ENCODE measurements at regions of chr6 and their contacts with region 1.

Region 1: DNA sequence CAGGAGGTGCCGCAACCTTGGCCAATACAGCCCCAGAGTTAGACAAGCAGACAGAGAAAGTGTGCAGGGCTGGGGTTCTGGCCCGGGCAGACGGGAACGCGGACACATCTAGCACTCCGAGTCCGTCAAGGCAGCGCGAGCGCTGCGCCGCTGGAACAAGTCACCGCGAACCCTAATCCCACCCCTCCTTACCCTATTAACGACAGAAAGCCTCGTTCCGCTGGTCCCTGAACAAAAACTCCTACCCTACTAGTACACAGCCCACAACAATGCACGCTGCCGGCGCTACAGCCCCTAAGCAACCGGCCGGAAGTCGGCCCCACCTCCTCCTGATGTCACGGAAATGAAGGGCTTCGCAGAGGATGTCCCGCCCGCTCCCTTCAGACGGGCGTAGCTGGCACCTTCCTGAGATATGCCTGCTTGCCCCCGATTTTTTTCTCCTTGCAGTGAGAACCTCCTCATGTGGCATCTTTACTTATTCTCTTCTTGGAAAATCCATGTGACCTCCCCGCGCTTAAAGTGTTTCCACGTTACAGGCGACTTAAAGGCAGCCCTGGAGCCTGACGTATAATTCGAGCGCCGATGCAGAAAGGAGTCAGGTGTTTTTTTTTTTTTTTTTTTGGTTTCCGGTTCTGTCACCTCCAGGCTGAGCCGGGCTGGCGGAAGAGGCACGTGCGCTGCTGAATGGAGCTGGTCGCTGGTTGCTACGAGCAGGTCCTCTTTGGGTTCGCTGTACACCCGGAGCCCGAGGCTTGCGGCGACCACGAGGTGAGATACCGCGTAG is at the starts of genes C6orf52 and PAK1IP1:
- DNase-seq: peak; percentile 91
- H3K4me3 ChIP-seq: peak within 1 kb of the TSS; percentile 58 to 98 (median 96)
- H3K27ac ChIP-seq: peak within 1 kb of the TSS; percentile 98
- H3K4me1 ChIP-seq: peaks cover 19% of the 10 kb centered on the region
- H3K27me3 ChIP-seq: no peaks in the 10 kb centered on the region
- CTCF ChIP-seq: no peak
- total RNA-seq, gene C6orf52: 0.50 TPM in 1 of 2 donors, not detected in the other
- total RNA-seq, gene PAK1IP1: 14.8 to 24.7 TPM

Region 2: GRCh38 chr6:10510592-10511367 is 183.7 kb before region 1 on chr6:
- CTCF ChIA-PET with region 1: no interaction called
- dilution Hi-C with region 1: no loop called
- in situ Hi-C with region 1: loop called in 1 of 2 experiments (anchors 10 kb)
- intact Hi-C with region 1: loop called (anchors 1 kb)
- DNase-seq: peak; percentile 27
- H3K4me3 ChIP-seq: no peak overlapping the region
- H3K27ac ChIP-seq: no peak overlapping the region
- H3K4me1 ChIP-seq: no peaks in the 10 kb centered on the region
- H3K27me3 ChIP-seq: no peaks in the 10 kb centered on the region
- CTCF ChIP-seq: peak; percentile 84 to 86

Region 3: GRCh38 chr6:10552270-10552810 is 142.2 kb before region 1 on chr6:
- CTCF ChIA-PET with region 1: no interaction called
- dilution Hi-C with region 1: no loop called
- in situ Hi-C with region 1: no loop called
- intact Hi-C with region 1: no loop called
- DNase-seq: no peak
- H3K4me3 ChIP-seq: no peak overlapping the region
- H3K27ac ChIP-seq: no peak overlapping the region
- H3K4me1 ChIP-seq: peaks cover 12% of the 10 kb centered on the region
- H3K27me3 ChIP-seq: no peaks in the 10 kb centered on the region
- CTCF ChIP-seq: no peak

Region 4: DNA sequence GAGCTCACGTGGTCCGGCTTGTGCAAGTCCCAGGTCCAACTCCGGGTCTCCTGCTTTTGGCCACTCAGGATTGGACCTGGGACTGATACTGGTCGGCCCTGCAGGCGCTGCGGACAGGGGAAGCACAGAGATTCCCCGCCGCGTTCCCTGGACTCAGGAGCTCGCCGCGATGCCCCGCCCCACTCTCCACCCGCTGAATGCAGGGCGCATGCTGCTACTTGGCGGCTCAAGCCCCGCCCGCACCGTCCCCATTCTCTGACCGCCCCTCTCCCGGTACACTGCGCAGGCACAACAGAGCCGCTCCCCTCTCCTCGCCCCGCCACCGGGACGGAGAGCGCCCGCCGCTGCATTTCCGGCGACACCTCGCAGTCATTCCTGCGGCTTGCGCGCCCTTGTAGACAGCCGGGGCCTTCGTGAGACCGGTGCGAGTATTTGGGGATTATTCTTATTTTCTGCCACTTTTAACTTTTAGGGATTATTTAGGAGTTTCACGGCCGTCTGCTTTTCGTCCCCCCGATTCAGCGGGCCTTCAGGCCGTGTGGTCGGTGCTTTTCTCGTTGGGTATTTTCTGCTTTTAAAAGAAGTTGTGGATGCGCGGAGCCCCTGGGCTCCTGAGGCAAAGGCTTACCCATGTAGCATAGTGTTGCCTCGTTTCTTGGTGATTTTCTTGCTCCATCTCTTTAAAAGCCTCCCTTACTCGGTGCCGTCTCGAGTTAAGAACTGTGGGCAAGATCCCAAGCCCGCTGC is 28.5 kb after region 1 on chr6 and contains the start of gene TMEM14C:
- CTCF ChIA-PET with region 1: no interaction called
- dilution Hi-C with region 1: no loop called
- in situ Hi-C with region 1: no loop called
- intact Hi-C with region 1: loop called (anchors 1 kb)
- DNase-seq: peak; percentile 97
- H3K4me3 ChIP-seq: peak within 1 kb of the TSS; percentile 76 to 92 (median 81)
- H3K27ac ChIP-seq: peak within 1 kb of the TSS; percentile 91
- H3K4me1 ChIP-seq: peaks cover 27% of the 10 kb centered on the region
- H3K27me3 ChIP-seq: no peaks in the 10 kb centered on the region
- CTCF ChIP-seq: no peak
- total RNA-seq, gene TMEM14C: 90.0 to 113 TPM

Region 5: GRCh38 chr6:10747251-10747972 is 52.9 kb after region 1 on chr6 and contains the start of gene TMEM14B:
- CTCF ChIA-PET with region 1: no interaction called
- dilution Hi-C with region 1: no loop called
- in situ Hi-C with region 1: no loop called
- intact Hi-C with region 1: loop called (anchors 1 kb)
- DNase-seq: peak; percentile 95
- H3K4me3 ChIP-seq: peak within 1 kb of the TSS; percentile 82 to 99 (median 84)
- H3K27ac ChIP-seq: peak within 1 kb of the TSS; percentile 86
- H3K4me1 ChIP-seq: peaks cover 14% of the 10 kb centered on the region
- H3K27me3 ChIP-seq: no peaks in the 10 kb centered on the region
- CTCF ChIP-seq: no peak
- total RNA-seq, gene TMEM14B: 39.3 to 63.5 TPM

Region 6: GRCh38 chr6:10800829-10801535 is 106.5 kb after region 1 on chr6:
- CTCF ChIA-PET with region 1: no interaction called
- dilution Hi-C with region 1: no loop called
- in situ Hi-C with region 1: no loop called
- intact Hi-C with region 1: loop called (anchors 1 kb)
- DNase-seq: peak; percentile 43
- H3K4me3 ChIP-seq: no peak overlapping the region
- H3K27ac ChIP-seq: no peak overlapping the region
- H3K4me1 ChIP-seq: peaks cover 6% of the 10 kb centered on the region
- H3K27me3 ChIP-seq: no peaks in the 10 kb centered on the region
- CTCF ChIP-seq: peak; percentile 98 to 99

Region 7: GRCh38 chr6:10979603-10980002 is 285.1 kb after region 1 on chr6:
- CTCF ChIA-PET with region 1: no interaction called
- dilution Hi-C with region 1: no loop called
- in situ Hi-C with region 1: no loop called
- intact Hi-C with region 1: no loop called
- DNase-seq: no peak
- H3K4me3 ChIP-seq: no peak overlapping the region
- H3K27ac ChIP-seq: no peak overlapping the region
- H3K4me1 ChIP-seq: no peaks in the 10 kb centered on the region
- H3K27me3 ChIP-seq: no peaks in the 10 kb centered on the region
- CTCF ChIP-seq: no peak

Region 8: GRCh38 chr6:11055127-11055627 is 360.7 kb after region 1 on chr6:
- CTCF ChIA-PET with region 1: no interaction called
- dilution Hi-C with region 1: no loop called
- in situ Hi-C with region 1: no loop called
- intact Hi-C with region 1: no loop called
- DNase-seq: no peak
- H3K4me3 ChIP-seq: no peak overlapping the region
- H3K27ac ChIP-seq: no peak overlapping the region
- H3K4me1 ChIP-seq: no peaks in the 10 kb centered on the region
- H3K27me3 ChIP-seq: no peaks in the 10 kb centered on the region
- CTCF ChIP-seq: no peak

Measured in mammary epithelial cell (primary cell).